ENCODE measurements at regions of chr7 and their contacts with region 1.

Region 1: GRCh38 chr7:103447073-103447951 is 1.3 kb upstream of the SLC26A5 start:
- DNase-seq: peak; percentile 71
- ATAC-seq: peak; percentile 80
- H3K4me3 Mint-ChIP-seq: no peak overlapping the region
- H3K27ac Mint-ChIP-seq: no peak overlapping the region
- H3K4me1 Mint-ChIP-seq: peaks cover 7% of the 10 kb centered on the region
- H3K27me3 Mint-ChIP-seq: peaks cover 69% of the 10 kb centered on the region

Region 2: DNA sequence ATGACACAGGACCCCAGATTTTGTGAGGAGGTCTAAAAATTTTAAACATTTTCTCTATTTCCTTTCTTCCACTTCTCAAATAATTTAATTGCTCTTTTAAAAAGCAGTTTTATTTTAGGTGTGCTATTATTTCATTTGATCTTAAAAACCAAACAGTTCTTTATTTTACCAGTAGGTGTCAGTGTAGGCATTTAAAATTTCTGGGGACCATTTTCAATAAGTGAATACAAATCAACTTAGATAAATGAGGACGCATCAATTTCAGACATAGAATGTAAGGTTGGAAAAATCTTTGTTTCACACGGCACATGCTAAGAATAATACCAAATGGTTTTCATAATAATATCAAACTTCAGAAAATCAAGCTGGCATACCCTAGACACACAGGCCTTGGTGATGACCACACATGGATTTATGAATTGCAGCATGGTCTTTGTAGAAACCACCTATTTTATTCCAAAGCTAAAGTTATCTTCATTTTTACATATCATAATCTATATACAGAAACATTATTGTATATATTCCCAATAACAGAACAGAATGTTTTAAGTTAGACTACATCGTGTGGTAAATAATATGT is 126.3 kb after region 1 on chr7:
- CTCF ChIA-PET with region 1: no interaction called
- POLR2A ChIA-PET with region 1: no interaction called
- intact Hi-C with region 1: loop called in 1 of 2 experiments (anchors 1 kb)
- DNase-seq: no peak
- ATAC-seq: no peak
- H3K4me3 Mint-ChIP-seq: no peak overlapping the region
- H3K27ac Mint-ChIP-seq: no peak overlapping the region
- H3K4me1 Mint-ChIP-seq: no peaks in the 10 kb centered on the region
- H3K27me3 Mint-ChIP-seq: peaks cover 8% of the 10 kb centered on the region